Activated naive CD4-positive, alpha-beta T cell treated with anti-CD3 and anti-CD28 coated beads for 36 hours (primary cell): ENCODE measurements at regions of chr2 and their contacts with region 1.

Region 1: GRCh38 chr2:177724398-177725287 is 332.1 kb downstream of the AGPS start:
- DNase-seq: peak; percentile 72
- H3K4me3 Mint-ChIP-seq: no peak overlapping the region
- H3K27ac Mint-ChIP-seq: no peak overlapping the region
- H3K4me1 Mint-ChIP-seq: peaks cover 2% of the 10 kb centered on the region
- H3K27me3 Mint-ChIP-seq: peaks cover 11% of the 10 kb centered on the region

Region 2: GRCh38 chr2:177093371-177093770 is 631.3 kb before region 1 on chr2:
- CTCF ChIA-PET with region 1: no interaction called
- intact Hi-C with region 1: no loop called
- DNase-seq: no peak
- H3K4me3 Mint-ChIP-seq: no peak overlapping the region
- H3K27ac Mint-ChIP-seq: no peak overlapping the region
- H3K4me1 Mint-ChIP-seq: no peaks in the 10 kb centered on the region
- H3K27me3 Mint-ChIP-seq: peaks cover 5% of the 10 kb centered on the region

Region 3: GRCh38 chr2:177419274-177419673 is 305.4 kb before region 1 on chr2:
- CTCF ChIA-PET with region 1: interaction called, 4 read pairs
- intact Hi-C with region 1: loop called (anchors 1 kb)
- DNase-seq: no peak
- H3K4me3 Mint-ChIP-seq: no peak overlapping the region
- H3K27ac Mint-ChIP-seq: peak overlapping the region; percentile 63
- H3K4me1 Mint-ChIP-seq: peaks cover 37% of the 10 kb centered on the region
- H3K27me3 Mint-ChIP-seq: no peaks in the 10 kb centered on the region

Region 4: GRCh38 chr2:177489719-177490301 is 234.8 kb before region 1 on chr2:
- CTCF ChIA-PET with region 1: no interaction called
- intact Hi-C with region 1: loop called (anchors 2 kb)
- DNase-seq: no peak
- H3K4me3 Mint-ChIP-seq: no peak overlapping the region
- H3K27ac Mint-ChIP-seq: no peak overlapping the region
- H3K4me1 Mint-ChIP-seq: no peaks in the 10 kb centered on the region
- H3K27me3 Mint-ChIP-seq: no peaks in the 10 kb centered on the region

Region 5: GRCh38 chr2:177763532-177764265 is 39.1 kb after region 1 on chr2:
- CTCF ChIA-PET with region 1: interaction called, 4 read pairs
- intact Hi-C with region 1: loop called (anchors 2 kb)
- DNase-seq: peak; percentile 88
- H3K4me3 Mint-ChIP-seq: no peak overlapping the region
- H3K27ac Mint-ChIP-seq: no peak overlapping the region
- H3K4me1 Mint-ChIP-seq: peaks cover 3% of the 10 kb centered on the region
- H3K27me3 Mint-ChIP-seq: peaks cover 12% of the 10 kb centered on the region